ENCODE measurements at regions of chr17 and their contacts with region 1.

Region 1: GRCh38 chr17:44533533-44534246 is 23.6 kb upstream of the FZD2 start:
- DNase-seq: peak; percentile 75
- H3K4me3 ChIP-seq: no peak overlapping the region
- H3K27ac ChIP-seq: no peak overlapping the region
- H3K4me1 ChIP-seq: peaks cover 6% of the 10 kb centered on the region
- H3K27me3 ChIP-seq: peaks cover 5 to 6% of the 10 kb centered on the region in 2 experiments
- CTCF ChIP-seq: peak; percentile 88 to 97
- POLR2A ChIP-seq: no peak

Region 2: GRCh38 chr17:44546671-44547606 is 13.2 kb after region 1 on chr17:
- CTCF ChIA-PET with region 1: interaction called, 15 read pairs
- POLR2A ChIA-PET with region 1: no interaction called
- dilution Hi-C with region 1: no loop called
- intact Hi-C with region 1: no loop called
- DNase-seq: peak; percentile 61
- H3K4me3 ChIP-seq: no peak overlapping the region
- H3K27ac ChIP-seq: peak overlapping the region; percentile 71
- H3K4me1 ChIP-seq: peaks cover 13% of the 10 kb centered on the region
- H3K27me3 ChIP-seq: peaks cover 0 to 5% of the 10 kb centered on the region in 2 experiments
- CTCF ChIP-seq: no peak
- POLR2A ChIP-seq: no peak

Region 3: GRCh38 chr17:44556832-44557606 is 23.3 kb after region 1 on chr17 and contains the start of gene FZD2:
- CTCF ChIA-PET with region 1: interaction called, 23 read pairs
- POLR2A ChIA-PET with region 1: interaction called, 6 read pairs
- dilution Hi-C with region 1: no loop called
- intact Hi-C with region 1: loop called (anchors 2 kb)
- DNase-seq: peak; percentile 92
- H3K4me3 ChIP-seq: peak within 1 kb of the TSS; percentile 44 to 94 (median 87)
- H3K27ac ChIP-seq: peak within 1 kb of the TSS; percentile 30
- H3K4me1 ChIP-seq: peaks cover 7% of the 10 kb centered on the region
- H3K27me3 ChIP-seq: peaks cover 21 to 36% of the 10 kb centered on the region in 2 experiments
- CTCF ChIP-seq: no peak
- POLR2A ChIP-seq: no peak
- total RNA-seq, gene FZD2: 4.4 and 5.8 TPM in 2 replicates

Region 4: GRCh38 chr17:44601539-44601938 is 67.8 kb after region 1 on chr17:
- CTCF ChIA-PET with region 1: no interaction called
- POLR2A ChIA-PET with region 1: no interaction called
- dilution Hi-C with region 1: no loop called
- intact Hi-C with region 1: no loop called
- DNase-seq: peak; percentile 29
- H3K4me3 ChIP-seq: no peak overlapping the region
- H3K27ac ChIP-seq: no peak overlapping the region
- H3K4me1 ChIP-seq: peaks cover 19% of the 10 kb centered on the region
- H3K27me3 ChIP-seq: no peaks in the 10 kb centered on the region
- CTCF ChIP-seq: no peak
- POLR2A ChIP-seq: no peak

Region 5: DNA sequence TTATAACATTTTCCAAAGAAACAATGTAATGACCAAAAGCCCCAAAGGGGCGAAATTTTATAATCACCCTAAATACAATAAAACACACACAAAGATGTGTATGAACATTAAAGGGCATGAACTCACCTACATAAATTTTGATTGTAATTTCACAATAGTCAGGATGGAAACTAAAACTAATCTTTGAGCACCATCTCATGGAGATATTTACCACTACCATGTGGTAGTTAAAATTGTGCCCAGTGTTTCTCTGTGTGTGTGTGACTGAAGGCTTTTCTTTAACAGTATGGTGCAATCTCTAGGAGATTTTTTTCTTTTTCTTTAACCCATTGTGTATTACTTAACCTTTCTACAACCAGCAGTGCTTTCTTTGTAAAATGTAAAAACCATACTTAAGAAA is 102.9 kb after region 1 on chr17:
- CTCF ChIA-PET with region 1: interaction called, 120 read pairs
- POLR2A ChIA-PET with region 1: no interaction called
- dilution Hi-C with region 1: no loop called
- intact Hi-C with region 1: loop called (anchors 1 kb)
- DNase-seq: peak; percentile 60
- H3K4me3 ChIP-seq: no peak overlapping the region
- H3K27ac ChIP-seq: no peak overlapping the region
- H3K4me1 ChIP-seq: no peaks in the 10 kb centered on the region
- H3K27me3 ChIP-seq: peaks cover 2 to 9% of the 10 kb centered on the region in 2 experiments
- CTCF ChIP-seq: peak in 1 of 2 donors; percentile 4
- POLR2A ChIP-seq: no peak

Region 6: DNA sequence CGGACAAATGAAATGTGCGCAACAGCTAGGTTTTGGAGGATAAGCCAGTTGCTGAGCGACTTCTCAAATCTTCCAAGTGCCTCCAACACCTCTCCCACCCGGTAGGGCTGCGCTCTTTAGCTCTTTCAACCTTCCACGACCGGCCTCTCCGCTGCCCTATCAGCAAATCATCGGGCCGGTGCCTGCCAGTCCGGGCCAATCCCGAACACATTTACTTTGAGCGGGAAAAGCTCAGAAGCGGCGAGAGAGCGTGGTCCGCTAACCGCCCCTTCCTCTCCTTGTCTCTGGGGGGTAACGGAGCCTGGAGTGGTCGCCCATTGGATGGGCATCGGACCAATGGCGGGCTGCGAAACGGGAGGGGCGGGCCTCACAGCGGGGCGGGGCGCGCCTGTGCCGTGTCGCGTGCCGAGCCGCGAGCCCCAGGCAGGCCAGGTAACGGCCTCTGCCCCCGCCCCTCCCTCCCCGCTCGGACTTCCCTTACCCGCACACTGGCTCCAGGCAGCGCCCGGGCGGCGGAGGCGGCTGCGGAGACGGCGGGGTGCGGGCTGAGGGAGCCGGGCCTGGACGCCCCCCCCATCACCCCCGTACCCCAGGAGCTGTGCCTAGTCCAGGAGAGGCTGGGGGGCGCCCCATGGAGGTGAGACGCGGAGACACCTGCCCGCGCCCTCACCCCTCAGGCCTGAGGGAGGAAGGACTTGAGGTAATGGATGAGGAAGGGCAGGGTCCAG is 122.5 kb after region 1 on chr17 and contains the start of gene MEIOC:
- CTCF ChIA-PET with region 1: interaction called, 14 read pairs
- POLR2A ChIA-PET with region 1: no interaction called
- dilution Hi-C with region 1: no loop called
- intact Hi-C with region 1: no loop called
- DNase-seq: peak; percentile 19
- H3K4me3 ChIP-seq: no peak within 1 kb of the TSS
- H3K27ac ChIP-seq: no peak within 1 kb of the TSS
- H3K4me1 ChIP-seq: no peaks in the 10 kb centered on the region
- H3K27me3 ChIP-seq: peaks cover 19 to 20% of the 10 kb centered on the region in 2 experiments
- CTCF ChIP-seq: peak in 1 of 2 donors; percentile 10
- POLR2A ChIP-seq: no peak
- total RNA-seq, gene MEIOC: 0.46 TPM in 1 of 2 replicates, not detected in the other

Region 7: DNA sequence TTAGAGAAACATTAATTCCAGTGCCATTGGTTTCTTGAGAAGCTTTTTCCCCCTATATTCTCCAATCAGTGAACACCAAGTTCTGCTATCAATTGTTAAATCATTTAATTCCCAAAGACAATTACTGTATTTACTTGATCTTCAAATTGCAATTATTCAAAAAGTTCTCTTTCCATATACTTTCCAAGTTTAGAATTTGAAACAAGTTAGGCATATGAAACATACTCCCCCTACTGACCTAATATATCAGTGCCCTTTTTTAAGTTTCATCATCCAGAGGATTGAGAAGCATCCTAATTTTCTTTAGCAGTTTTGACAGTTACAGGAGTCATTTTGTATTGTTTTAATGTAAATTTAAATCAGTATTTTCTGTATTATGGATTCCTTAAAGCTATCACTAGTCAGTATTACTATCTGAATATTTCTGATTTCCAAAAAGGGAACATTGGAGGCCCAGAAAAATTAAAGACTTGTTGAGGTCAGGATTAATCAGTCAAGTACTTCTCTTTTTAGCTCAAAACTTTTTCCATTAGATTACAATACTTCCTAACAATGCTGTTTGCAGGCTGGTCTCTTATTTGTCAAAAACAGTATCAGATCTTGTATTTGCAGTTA is 138.9 kb after region 1 on chr17:
- CTCF ChIA-PET with region 1: interaction called, 43 read pairs
- POLR2A ChIA-PET with region 1: no interaction called
- dilution Hi-C with region 1: no loop called
- intact Hi-C with region 1: loop called (anchors 1 kb)
- DNase-seq: peak; percentile 44
- H3K4me3 ChIP-seq: no peak overlapping the region
- H3K27ac ChIP-seq: no peak overlapping the region
- H3K4me1 ChIP-seq: peaks cover 10% of the 10 kb centered on the region
- H3K27me3 ChIP-seq: peaks cover 0 to 2% of the 10 kb centered on the region in 2 experiments
- CTCF ChIP-seq: peak; percentile 35 to 46
- POLR2A ChIP-seq: no peak

Region 8: GRCh38 chr17:44733753-44734152 is 200.1 kb after region 1 on chr17:
- CTCF ChIA-PET with region 1: no interaction called
- POLR2A ChIA-PET with region 1: no interaction called
- dilution Hi-C with region 1: no loop called
- intact Hi-C with region 1: loop called (anchors 10 kb)
- DNase-seq: no peak
- H3K4me3 ChIP-seq: no peak overlapping the region
- H3K27ac ChIP-seq: no peak overlapping the region
- H3K4me1 ChIP-seq: no peaks in the 10 kb centered on the region
- H3K27me3 ChIP-seq: no peaks in the 10 kb centered on the region
- CTCF ChIP-seq: peak in 1 of 2 donors; percentile 29
- POLR2A ChIP-seq: no peak

Measured in endothelial cell of umbilical vein (primary cell).